Dendritic cell treated with granulocyte-macrophage colony-stimulating factor and Interleukin-4, amounts not matched to agents 40 ng/mL and 50 ng/mL, for 4 days (primary cell): ENCODE measurements at regions of chr4 and their contacts with region 1.

Region 1: DNA sequence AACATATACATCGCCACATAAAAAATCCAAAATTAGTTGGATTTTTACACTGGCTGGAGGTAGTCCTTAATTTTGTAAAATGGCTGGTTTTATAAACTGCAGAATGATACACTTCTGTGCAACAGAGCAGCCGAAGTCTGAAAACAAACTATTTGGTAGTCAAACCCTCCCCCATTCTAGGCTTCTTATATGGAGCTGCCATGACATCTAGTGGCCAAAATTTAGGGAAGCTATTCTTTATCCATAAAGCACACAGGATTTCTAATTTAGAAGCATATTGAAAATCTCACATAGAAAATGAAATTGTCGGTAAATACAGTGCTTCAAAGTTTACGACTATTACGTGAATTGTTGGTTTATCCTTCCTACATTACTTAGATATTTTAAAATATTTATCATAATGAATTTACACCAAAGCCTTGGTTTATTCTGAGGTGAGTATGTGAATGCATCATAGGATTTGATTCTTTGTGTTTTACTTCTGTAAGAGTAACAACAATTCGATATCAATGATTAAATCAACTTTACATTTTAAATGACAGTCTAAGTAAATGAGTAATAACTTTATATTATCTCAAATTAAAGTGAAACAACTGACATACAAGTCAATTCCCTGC is 113.4 kb upstream of the FAM241A start:
- H3K4me3 Mint-ChIP-seq: no peak overlapping the region
- H3K27ac Mint-ChIP-seq: no peak overlapping the region
- H3K4me1 Mint-ChIP-seq: no peaks in the 10 kb centered on the region
- H3K27me3 Mint-ChIP-seq: peaks cover 26% of the 10 kb centered on the region

Region 2: DNA sequence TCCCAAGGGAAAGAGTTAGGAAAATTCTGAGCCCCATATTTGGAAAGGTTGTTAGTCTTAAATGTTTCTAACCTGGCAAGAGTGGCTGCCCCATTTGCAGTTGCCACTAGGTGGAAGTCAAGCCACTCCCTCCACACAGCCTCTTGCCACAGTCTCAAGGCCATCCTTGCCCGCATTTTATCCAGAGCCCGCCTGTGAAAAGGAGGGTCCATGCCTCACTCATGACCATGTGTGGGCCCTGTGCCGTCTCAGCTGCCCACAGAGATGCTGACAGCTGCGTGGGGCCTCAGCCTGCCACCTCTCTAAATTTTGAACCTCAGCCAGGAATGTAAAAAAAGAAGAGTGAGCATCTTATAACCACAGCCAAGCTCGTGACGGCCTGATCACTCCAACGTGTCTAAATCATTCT is 88.0 kb before region 1 on chr4:
- intact Hi-C with region 1: loop called (anchors 2 kb)
- H3K4me3 Mint-ChIP-seq: no peak overlapping the region
- H3K27ac Mint-ChIP-seq: no peak overlapping the region
- H3K4me1 Mint-ChIP-seq: no peaks in the 10 kb centered on the region
- H3K27me3 Mint-ChIP-seq: peaks cover 14% of the 10 kb centered on the region

Region 3: GRCh38 chr4:111991797-111992196 is 40.0 kb before region 1 on chr4:
- intact Hi-C with region 1: no loop called
- H3K4me3 Mint-ChIP-seq: peak overlapping the region; percentile 41
- H3K27ac Mint-ChIP-seq: peak overlapping the region; percentile 80
- H3K4me1 Mint-ChIP-seq: peaks cover 18% of the 10 kb centered on the region
- H3K27me3 Mint-ChIP-seq: peaks cover 23% of the 10 kb centered on the region